Mammary epithelial cell (primary cell): ENCODE measurements at regions of chr1 and their contacts with region 1.

Region 1: DNA sequence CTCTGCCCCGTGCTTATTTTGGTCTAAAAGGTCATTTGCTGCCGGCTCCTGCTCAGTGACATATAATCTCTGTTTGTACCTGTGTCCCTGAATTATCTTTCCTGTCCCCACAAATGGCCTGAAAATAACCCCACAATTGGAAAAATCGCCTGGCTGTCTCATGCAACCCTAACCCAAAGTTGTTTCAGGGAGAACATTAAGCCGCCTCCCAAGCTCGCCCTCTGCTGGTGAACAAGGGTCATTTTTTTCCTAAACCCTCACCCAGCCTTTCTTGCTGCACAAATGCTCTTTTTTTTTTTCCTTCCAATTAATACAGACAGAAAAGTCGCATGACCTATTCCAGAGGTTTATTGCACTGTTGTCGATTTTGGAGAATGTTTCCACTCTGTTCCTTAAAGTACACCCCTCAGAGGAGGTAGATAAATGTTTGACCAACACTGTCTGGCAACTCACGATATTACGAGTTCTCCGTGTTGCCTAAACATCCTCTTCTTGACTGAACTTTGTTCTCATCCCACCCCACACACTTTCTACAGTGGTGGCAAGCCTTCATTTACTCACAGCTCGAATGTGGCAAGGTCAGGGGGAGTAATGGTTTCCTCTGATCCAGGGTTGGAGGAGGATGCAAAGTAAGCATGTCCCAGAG is 148.7 kb downstream of the ZZZ3 start:
- DNase-seq: peak; percentile 35
- H3K4me3 ChIP-seq: no peak overlapping the region
- H3K27ac ChIP-seq: no peak overlapping the region
- H3K4me1 ChIP-seq: peaks cover 28% of the 10 kb centered on the region
- H3K27me3 ChIP-seq: no peaks in the 10 kb centered on the region
- CTCF ChIP-seq: peak; percentile 71 to 81

Region 2: DNA sequence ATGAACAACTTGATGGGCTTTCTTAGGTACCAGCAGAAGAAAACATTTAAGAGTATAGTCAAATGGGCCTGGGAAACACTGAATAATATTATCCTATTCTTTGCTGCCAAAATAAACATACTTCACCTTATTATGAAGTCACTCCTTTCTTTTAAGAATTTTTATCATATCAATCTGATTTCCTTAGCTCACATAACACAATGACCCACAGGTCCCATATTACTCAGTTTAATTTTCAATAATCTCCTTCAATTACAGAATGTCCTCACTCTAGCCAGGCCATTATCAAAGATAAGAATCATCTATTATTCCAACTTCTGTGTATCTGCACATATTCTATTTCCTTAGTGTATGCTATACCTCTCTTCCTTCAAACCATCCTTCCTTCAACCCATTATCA is 377.6 kb before region 1 on chr1:
- CTCF ChIA-PET with region 1: no interaction called
- dilution Hi-C with region 1: no loop called
- in situ Hi-C with region 1: loop called in 1 of 2 experiments (anchors 10 kb)
- intact Hi-C with region 1: no loop called
- DNase-seq: no peak
- H3K4me3 ChIP-seq: no peak overlapping the region
- H3K27ac ChIP-seq: no peak overlapping the region
- H3K4me1 ChIP-seq: no peaks in the 10 kb centered on the region
- H3K27me3 ChIP-seq: no peaks in the 10 kb centered on the region
- CTCF ChIP-seq: no peak

Region 3: DNA sequence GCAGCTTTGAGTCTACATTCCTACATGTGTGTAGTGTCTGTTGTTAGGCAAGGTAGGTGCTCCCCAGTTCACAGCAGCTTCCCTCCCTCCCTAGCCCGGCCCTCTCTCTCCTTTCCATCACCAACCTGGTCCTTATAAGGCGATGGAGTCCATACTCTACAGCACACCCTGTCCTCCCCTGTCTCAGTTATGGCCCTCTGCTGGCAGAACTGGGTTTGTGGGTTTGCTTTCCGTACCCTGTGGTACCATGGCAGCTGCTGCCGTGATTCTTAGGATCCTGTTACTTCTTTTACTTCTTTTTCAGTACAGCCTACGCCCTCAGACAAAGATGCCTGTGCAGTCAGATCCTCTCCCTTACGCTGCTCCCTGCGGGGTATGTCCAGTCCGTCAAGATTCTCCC is 220.3 kb before region 1 on chr1:
- CTCF ChIA-PET with region 1: no interaction called
- dilution Hi-C with region 1: no loop called
- in situ Hi-C with region 1: loop called in 1 of 2 experiments (anchors 25 kb)
- intact Hi-C with region 1: no loop called
- DNase-seq: no peak
- H3K4me3 ChIP-seq: no peak overlapping the region
- H3K27ac ChIP-seq: no peak overlapping the region
- H3K4me1 ChIP-seq: peaks cover 5% of the 10 kb centered on the region
- H3K27me3 ChIP-seq: no peaks in the 10 kb centered on the region
- CTCF ChIP-seq: peak; percentile 20 to 35

Region 4: DNA sequence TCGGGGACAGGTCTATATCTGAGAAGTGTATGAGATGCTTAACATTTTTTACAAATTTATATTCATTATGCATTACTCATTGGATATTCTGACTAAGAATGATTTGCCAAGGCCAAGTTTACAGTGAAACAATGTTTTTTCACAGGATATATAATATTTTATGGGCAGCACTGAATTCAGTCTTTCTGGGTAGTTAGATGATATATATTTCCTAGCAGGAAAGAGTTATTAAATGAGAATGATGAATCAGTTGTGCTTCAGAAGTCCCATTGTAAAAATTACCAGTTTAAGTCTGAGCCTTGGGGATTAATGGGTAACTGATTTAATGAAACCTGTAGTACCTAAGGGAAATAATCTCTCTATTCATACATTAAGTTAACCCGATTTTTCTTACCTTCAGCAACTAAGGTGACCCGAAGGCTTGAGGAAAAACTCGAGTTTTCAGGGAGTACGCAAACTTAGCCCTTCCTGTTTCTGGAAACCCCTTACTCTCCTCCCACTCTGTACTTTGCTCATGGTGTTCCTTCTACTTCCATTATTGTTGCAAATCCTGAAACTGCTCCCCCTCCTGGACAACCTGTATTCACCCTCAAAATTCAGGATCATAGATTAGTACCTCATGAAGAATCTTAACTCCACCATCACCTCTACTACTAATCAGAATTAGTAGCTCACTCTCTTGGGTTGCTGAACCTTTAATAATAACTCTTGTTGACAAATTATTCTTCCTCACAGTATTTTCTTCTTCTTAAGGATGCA is 116.9 kb before region 1 on chr1:
- CTCF ChIA-PET with region 1: no interaction called
- dilution Hi-C with region 1: no loop called
- in situ Hi-C with region 1: no loop called
- intact Hi-C with region 1: loop called (anchors 1 kb)
- DNase-seq: no peak
- H3K4me3 ChIP-seq: no peak overlapping the region
- H3K27ac ChIP-seq: no peak overlapping the region
- H3K4me1 ChIP-seq: peaks cover 6% of the 10 kb centered on the region
- H3K27me3 ChIP-seq: no peaks in the 10 kb centered on the region
- CTCF ChIP-seq: peak; percentile 57 to 58

Region 5: GRCh38 chr1:77514921-77515776 is 18.6 kb before region 1 on chr1:
- CTCF ChIA-PET with region 1: no interaction called
- dilution Hi-C with region 1: no loop called
- in situ Hi-C with region 1: no loop called
- intact Hi-C with region 1: loop called (anchors 2 kb)
- DNase-seq: no peak
- H3K4me3 ChIP-seq: no peak overlapping the region
- H3K27ac ChIP-seq: no peak overlapping the region
- H3K4me1 ChIP-seq: peaks cover 27% of the 10 kb centered on the region
- H3K27me3 ChIP-seq: no peaks in the 10 kb centered on the region
- CTCF ChIP-seq: peak in 1 of 2 donors; percentile 1